ENCODE measurements at regions of chr20 and their contacts with region 1.

Region 1: GRCh38 chr20:17569616-17570346 is at the start of gene DSTN:
- DNase-seq: peak; percentile 96 to 99
- ATAC-seq: peak; percentile 85 to 88
- H3K4me3 ChIP-seq: peak within 1 kb of the TSS; percentile 87
- H3K27ac ChIP-seq: peak within 1 kb of the TSS; percentile 91 to 96
- H3K4me1 ChIP-seq: peaks cover 51% of the 10 kb centered on the region
- CTCF ChIP-seq: no peak
- EP300 ChIP-seq: peak in 1 of 2 experiments; percentile 16; a peak in 1 of 5 replicates
- POLR2A ChIP-seq: peak; percentile 98
- RAD21 ChIP-seq: peak in 1 of 2 experiments; percentile 9; a peak in 1 of 5 replicates
- polyA plus RNA-seq, gene DSTN: 425 and 544 TPM in 2 replicates

Region 2: DNA sequence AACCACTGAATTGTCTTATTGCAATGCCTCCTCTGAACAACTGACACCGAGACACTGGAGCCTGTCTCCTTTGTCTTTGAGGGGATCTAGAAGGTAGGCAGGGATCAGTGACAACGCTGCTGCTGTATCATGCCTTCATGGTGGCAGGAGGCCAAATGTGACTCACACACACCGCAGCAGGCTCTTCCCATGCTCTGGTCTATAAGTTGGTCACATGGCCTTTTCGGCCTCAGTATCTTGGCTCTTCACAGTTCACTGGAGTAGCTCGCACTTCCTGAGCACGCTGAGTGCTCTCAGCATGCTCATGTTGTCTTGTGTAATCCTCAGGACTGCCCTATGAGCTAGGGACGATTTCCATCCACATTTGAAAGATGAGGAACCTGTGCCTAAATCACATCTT is 510.3 kb before region 1 on chr20:
- CTCF ChIA-PET with region 1: no interaction called
- POLR2A ChIA-PET with region 1: no interaction called
- DNase-seq: peak in 1 of 2 experiments; percentile 8
- ATAC-seq: peak in 1 of 2 experiments; percentile 43; a peak in 1 of 6 replicates
- H3K4me3 ChIP-seq: no peak overlapping the region
- H3K27ac ChIP-seq: no peak overlapping the region
- H3K4me1 ChIP-seq: no peaks in the 10 kb centered on the region
- CTCF ChIP-seq: no peak
- EP300 ChIP-seq: no peak
- POLR2A ChIP-seq: no peak
- RAD21 ChIP-seq: no peak

Region 3: DNA sequence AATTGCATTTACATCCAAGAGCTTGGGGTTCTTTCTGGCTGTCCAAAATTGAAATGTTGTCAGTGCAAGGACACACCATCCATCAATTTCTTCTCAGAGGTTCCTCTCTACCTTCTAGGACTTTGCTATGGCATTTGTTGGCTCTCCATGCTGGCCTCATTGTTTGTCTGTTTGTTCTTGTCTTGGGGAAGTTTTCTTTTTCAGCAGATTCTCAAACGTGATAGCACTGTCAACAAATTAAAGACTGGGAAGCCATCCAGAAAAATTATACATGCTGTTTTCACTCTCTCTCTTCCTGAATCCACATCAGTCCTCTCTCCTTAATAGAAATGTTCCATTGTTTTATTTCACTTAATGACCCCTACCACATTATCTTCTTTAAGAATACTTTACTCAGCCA is 212.6 kb before region 1 on chr20:
- CTCF ChIA-PET with region 1: no interaction called
- POLR2A ChIA-PET with region 1: no interaction called
- DNase-seq: no peak
- ATAC-seq: no peak
- H3K4me3 ChIP-seq: no peak overlapping the region
- H3K27ac ChIP-seq: no peak overlapping the region
- H3K4me1 ChIP-seq: no peaks in the 10 kb centered on the region
- CTCF ChIP-seq: no peak
- EP300 ChIP-seq: no peak
- POLR2A ChIP-seq: no peak
- RAD21 ChIP-seq: no peak

Region 4: GRCh38 chr20:17530716-17531664 is 38.8 kb before region 1 on chr20 and contains the start of gene BFSP1:
- CTCF ChIA-PET with region 1: interaction called, 94 read pairs
- POLR2A ChIA-PET with region 1: interaction called, 25 read pairs
- DNase-seq: peak; percentile 58 to 79
- ATAC-seq: peak; percentile 81 to 86
- H3K4me3 ChIP-seq: peak within 1 kb of the TSS; percentile 55
- H3K27ac ChIP-seq: peak within 1 kb of the TSS; percentile 86 to 95
- H3K4me1 ChIP-seq: peaks cover 21% of the 10 kb centered on the region
- CTCF ChIP-seq: peak; percentile 12; the same call in 1 of the 3 replicates
- EP300 ChIP-seq: no peak
- POLR2A ChIP-seq: peak; percentile 43
- RAD21 ChIP-seq: no peak
- polyA plus RNA-seq, gene BFSP1: 6.1 and 7.2 TPM in 2 replicates

Region 5: GRCh38 chr20:17558154-17558940 is 11.4 kb before region 1 on chr20:
- CTCF ChIA-PET with region 1: interaction called, 22 read pairs
- POLR2A ChIA-PET with region 1: interaction called, 127 read pairs
- DNase-seq: peak; percentile 92 to 93
- ATAC-seq: peak; percentile 92 to 94
- H3K4me3 ChIP-seq: peak overlapping the region; percentile 26
- H3K27ac ChIP-seq: peak overlapping the region; percentile 89 to 96
- H3K4me1 ChIP-seq: peaks cover 62% of the 10 kb centered on the region
- CTCF ChIP-seq: no peak
- EP300 ChIP-seq: peak in 1 of 2 experiments; percentile 65; a peak in 2 of 5 replicates
- POLR2A ChIP-seq: peak; percentile 53
- RAD21 ChIP-seq: no peak; a peak in 4 of 5 replicates

Region 6: DNA sequence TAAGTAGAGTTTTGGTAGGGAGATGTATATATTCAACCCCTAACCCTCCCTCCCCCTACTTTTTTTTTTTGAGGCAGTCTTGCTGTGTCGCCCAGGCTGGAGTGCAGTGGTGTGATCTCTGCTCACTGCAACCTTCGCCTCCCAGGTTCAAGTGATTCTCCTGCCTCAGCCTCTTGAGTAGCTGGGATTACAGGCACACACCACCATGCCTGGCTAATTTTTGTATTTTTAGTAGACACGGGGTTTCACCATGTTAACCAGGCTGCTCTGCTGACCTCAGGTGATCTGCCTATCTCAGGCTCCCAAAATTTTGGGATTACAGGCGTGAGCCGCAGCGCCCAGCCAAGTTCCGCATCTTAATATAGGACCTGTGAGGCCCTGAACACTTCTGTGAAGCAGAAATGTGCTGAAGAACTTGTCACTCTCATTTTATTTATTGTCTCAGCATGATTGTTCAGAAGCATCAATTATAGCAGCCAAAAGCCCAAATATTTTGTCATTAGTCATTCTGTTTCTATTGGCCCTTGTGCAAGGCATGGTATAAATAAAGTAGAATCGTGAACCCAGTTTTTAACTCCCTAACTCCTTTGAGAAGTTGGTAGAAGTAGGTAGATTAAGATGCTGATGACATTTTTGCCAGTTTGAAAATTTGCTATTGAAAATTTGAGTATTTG is 19.5 kb after region 1 on chr20:
- CTCF ChIA-PET with region 1: interaction called, 24 read pairs
- POLR2A ChIA-PET with region 1: interaction called, 16 read pairs
- DNase-seq: no peak
- ATAC-seq: peak in 1 of 2 experiments; percentile 8; a peak in 2 of 6 replicates
- H3K4me3 ChIP-seq: no peak overlapping the region
- H3K27ac ChIP-seq: 0 out of 6 replicates have a peak overlapping the region, but pooled peaks of 1 of the 2 experiments have one; percentile 6
- H3K4me1 ChIP-seq: peaks cover 72% of the 10 kb centered on the region
- CTCF ChIP-seq: no peak
- EP300 ChIP-seq: no peak
- POLR2A ChIP-seq: no peak
- RAD21 ChIP-seq: no peak

Region 7: DNA sequence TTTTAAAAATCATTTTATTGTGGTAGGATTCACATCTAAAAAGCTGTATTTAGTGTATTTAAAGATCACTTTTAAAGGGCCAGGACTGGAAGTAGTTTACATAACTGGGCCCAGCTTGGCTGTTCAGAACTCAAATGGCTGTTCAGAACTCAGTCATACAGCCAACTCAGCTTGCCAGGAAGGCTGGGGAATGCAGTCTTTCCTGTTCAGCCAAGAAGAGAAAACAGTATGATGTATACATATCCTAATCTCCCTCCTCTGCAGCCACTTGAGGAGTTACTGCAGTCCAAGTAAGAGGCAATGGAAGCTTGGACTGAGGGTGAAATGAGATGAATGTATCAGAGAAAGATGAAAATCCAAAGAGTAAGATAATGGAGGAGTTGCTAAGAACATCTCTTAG is 24.7 kb after region 1 on chr20:
- CTCF ChIA-PET with region 1: interaction called, 24 read pairs
- POLR2A ChIA-PET with region 1: interaction called, 16 read pairs
- DNase-seq: no peak
- ATAC-seq: no peak; a peak in 1 of 6 replicates
- H3K4me3 ChIP-seq: no peak overlapping the region
- H3K27ac ChIP-seq: no peak overlapping the region
- H3K4me1 ChIP-seq: peaks cover 32% of the 10 kb centered on the region
- CTCF ChIP-seq: no peak
- EP300 ChIP-seq: no peak
- POLR2A ChIP-seq: no peak
- RAD21 ChIP-seq: no peak

Region 8: DNA sequence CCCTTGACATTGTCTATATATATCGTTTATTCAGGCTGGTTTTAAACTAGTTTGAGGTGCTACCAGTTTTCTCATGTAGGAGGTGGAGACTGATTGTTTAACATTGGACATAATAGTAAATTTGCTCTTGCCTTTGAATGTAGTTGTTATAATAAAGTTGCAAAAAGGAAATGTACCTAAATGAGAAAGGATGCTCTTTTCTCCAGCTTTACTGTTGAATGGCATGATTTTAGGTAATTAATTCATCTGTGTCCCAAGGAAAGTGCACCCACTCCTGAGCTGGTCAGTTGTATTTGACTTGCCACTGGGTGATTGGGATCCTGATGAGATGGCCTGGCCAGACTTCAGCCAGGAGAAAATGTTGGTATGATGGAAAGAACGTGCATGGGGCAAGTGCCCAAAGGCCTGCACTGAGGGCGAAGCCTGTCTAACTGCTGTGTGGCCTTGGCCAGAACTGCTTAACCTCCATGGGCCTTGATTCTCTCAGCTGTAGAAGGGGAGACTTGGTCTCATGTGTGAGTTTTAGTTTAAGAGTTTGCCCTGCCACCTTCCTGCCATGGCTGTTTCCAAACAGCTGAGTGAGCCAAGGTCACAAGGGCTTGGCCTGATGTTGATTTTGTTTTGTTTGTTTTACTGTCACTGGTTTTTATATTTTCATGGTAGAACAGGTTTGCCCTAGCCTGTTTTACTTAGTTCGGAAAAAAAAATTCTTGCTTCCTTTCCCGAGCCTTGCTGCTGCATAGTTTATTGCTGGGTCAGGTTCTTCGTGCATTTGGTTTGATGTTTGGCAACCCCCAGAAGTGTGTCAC is 35.3 kb after region 1 on chr20:
- CTCF ChIA-PET with region 1: interaction called, 9 read pairs
- POLR2A ChIA-PET with region 1: interaction called, 13 read pairs
- DNase-seq: no peak
- ATAC-seq: peak; percentile 20 to 34; a peak in 4 of 6 replicates
- H3K4me3 ChIP-seq: no peak overlapping the region
- H3K27ac ChIP-seq: peak overlapping the region; percentile 4 to 55; a peak in 4 of 6 replicates
- H3K4me1 ChIP-seq: peaks cover 64% of the 10 kb centered on the region
- CTCF ChIP-seq: no peak
- EP300 ChIP-seq: no peak
- POLR2A ChIP-seq: no peak
- RAD21 ChIP-seq: no peak

Region 9: DNA sequence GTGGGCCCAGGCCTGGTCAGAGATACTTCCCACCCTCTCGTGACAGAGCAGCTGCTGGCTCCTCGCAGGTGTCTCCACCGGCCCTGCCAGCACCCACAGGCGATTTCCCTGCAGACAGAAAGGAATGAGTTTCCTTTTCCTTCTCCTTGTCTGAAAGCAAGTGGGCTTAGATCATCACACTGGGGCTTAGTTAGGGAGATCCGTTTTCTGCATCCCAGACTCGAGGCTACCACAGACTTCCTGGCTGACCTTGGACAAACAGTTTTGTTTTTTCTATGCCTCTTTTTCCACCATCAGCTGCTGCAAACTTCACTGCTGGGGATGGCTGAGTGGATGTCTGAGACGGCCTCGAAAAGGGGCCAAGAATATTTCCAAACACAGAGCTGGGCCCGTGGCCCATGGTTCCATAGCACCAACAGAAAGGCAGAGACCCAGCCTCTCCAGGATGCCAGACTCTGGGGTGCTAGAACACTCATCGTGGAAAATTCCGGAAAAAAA is 216.5 kb after region 1 on chr20:
- CTCF ChIA-PET with region 1: no interaction called
- POLR2A ChIA-PET with region 1: no interaction called
- DNase-seq: no peak
- ATAC-seq: no peak
- H3K4me3 ChIP-seq: no peak overlapping the region
- H3K27ac ChIP-seq: no peak overlapping the region
- H3K4me1 ChIP-seq: no peaks in the 10 kb centered on the region
- CTCF ChIP-seq: no peak
- EP300 ChIP-seq: no peak
- POLR2A ChIP-seq: no peak
- RAD21 ChIP-seq: no peak